ENCODE measurements at regions of chr14 and their contacts with region 1.

Region 1: GRCh38 chr14:103292426-103293374 is 41.3 kb upstream of the EIF5 start:
- DNase-seq: peak; percentile 64 to 84
- ATAC-seq: peak; percentile 84 to 97 (median 94)
- H3K4me3 ChIP-seq: no peak overlapping the region
- H3K4me3 Mint-ChIP-seq: no peak overlapping the region
- H3K27ac ChIP-seq: no peak overlapping the region
- H3K27ac Mint-ChIP-seq: no peak overlapping the region
- H3K4me1 ChIP-seq: no peaks in the 10 kb centered on the region
- H3K4me1 Mint-ChIP-seq: peaks cover 7 to 8% of the 10 kb centered on the region in 2 donors
- H3K27me3 ChIP-seq: no peaks in the 10 kb centered on the region
- H3K27me3 Mint-ChIP-seq: peaks cover 13 to 27% of the 10 kb centered on the region in 2 donors
- CTCF ChIP-seq: peak; percentile 83

Region 2: GRCh38 chr14:103104654-103105452 is 187.8 kb before region 1 on chr14:
- intact Hi-C with region 1: loop called (anchors 2 kb)
- DNase-seq: peak; percentile 60 to 82
- ATAC-seq: peak; percentile 78 to 89 (median 81)
- H3K4me3 ChIP-seq: no peak overlapping the region
- H3K4me3 Mint-ChIP-seq: no peak overlapping the region
- H3K27ac ChIP-seq: no peak overlapping the region
- H3K27ac Mint-ChIP-seq: no peak overlapping the region
- H3K4me1 ChIP-seq: peaks cover 21% of the 10 kb centered on the region
- H3K4me1 Mint-ChIP-seq: peaks cover 6 to 7% of the 10 kb centered on the region in 2 donors
- H3K27me3 ChIP-seq: peaks cover 14% of the 10 kb centered on the region
- H3K27me3 Mint-ChIP-seq: peaks cover 11 to 26% of the 10 kb centered on the region in 2 donors
- CTCF ChIP-seq: peak; percentile 84

Region 3: DNA sequence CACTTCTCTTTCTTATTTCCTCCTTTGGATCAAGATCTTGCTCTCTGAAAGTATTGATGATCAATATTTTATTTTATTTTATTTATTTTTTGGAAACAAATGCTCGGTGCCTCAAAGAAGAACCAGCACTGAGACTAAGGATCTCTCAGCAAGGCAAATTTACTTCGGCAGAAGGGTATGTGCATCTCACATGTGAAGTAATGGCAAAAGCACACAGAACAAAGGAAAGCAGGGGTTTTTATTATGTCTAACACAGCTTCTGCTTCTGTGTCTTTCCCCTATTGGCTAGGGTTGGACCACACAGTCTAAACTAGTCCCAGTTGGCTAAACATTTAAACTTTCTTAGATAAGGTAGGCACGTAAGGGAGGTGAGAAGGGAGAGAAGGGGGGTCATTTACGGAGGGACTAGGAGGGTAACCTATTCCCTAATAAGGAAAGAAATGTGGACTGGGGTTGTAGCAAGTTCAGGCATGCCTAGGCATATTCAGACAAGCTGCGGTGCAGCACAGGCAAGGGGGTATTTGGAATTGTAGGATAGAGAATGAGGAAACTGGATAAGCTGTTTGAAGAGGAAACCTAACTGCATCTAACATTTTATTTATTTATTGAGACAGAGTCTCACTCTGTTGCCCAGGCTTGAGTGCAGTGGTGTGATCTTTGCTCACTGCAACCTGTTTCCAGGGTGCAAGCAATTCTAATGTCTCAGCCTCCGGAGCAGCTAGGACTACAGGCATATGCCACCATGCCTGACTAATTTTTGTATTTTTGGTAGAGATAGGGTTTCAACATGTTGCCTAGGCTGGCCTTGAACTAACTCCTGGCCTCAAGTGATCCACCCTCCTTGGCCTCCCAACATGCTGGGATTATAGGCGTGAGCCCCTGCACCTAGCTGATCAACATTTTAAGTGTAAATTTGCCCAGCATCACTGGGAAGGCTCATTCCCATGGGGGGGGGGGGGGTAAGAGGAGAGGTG is 48.6 kb before region 1 on chr14:
- intact Hi-C with region 1: no loop called
- DNase-seq: no peak
- ATAC-seq: no peak
- H3K4me3 ChIP-seq: no peak overlapping the region
- H3K4me3 Mint-ChIP-seq: no peak overlapping the region
- H3K27ac ChIP-seq: no peak overlapping the region
- H3K27ac Mint-ChIP-seq: no peak overlapping the region
- H3K4me1 ChIP-seq: no peaks in the 10 kb centered on the region
- H3K4me1 Mint-ChIP-seq: no peaks in the 10 kb centered on the region
- H3K27me3 ChIP-seq: no peaks in the 10 kb centered on the region
- H3K27me3 Mint-ChIP-seq: peaks cover 12 to 27% of the 10 kb centered on the region in 2 donors
- CTCF ChIP-seq: no peak